Activated CD8-positive, alpha-beta T cell treated with anti-CD3 and anti-CD28 coated beads for 36 hours (primary cell): ENCODE measurements at regions of chr5 and their contacts with region 1.

Region 1: GRCh38 chr5:181173420-181174342 is 26.3 kb downstream of the OR2V2 start:
- DNase-seq: peak; percentile 88
- ATAC-seq: peak; percentile 75
- H3K4me3 Mint-ChIP-seq: peak overlapping the region; percentile 79
- H3K27ac Mint-ChIP-seq: peak overlapping the region; percentile 85
- H3K4me1 Mint-ChIP-seq: peaks cover 37% of the 10 kb centered on the region
- H3K27me3 Mint-ChIP-seq: peaks cover 46% of the 10 kb centered on the region
- CTCF ChIP-seq: no peak

Region 2: DNA sequence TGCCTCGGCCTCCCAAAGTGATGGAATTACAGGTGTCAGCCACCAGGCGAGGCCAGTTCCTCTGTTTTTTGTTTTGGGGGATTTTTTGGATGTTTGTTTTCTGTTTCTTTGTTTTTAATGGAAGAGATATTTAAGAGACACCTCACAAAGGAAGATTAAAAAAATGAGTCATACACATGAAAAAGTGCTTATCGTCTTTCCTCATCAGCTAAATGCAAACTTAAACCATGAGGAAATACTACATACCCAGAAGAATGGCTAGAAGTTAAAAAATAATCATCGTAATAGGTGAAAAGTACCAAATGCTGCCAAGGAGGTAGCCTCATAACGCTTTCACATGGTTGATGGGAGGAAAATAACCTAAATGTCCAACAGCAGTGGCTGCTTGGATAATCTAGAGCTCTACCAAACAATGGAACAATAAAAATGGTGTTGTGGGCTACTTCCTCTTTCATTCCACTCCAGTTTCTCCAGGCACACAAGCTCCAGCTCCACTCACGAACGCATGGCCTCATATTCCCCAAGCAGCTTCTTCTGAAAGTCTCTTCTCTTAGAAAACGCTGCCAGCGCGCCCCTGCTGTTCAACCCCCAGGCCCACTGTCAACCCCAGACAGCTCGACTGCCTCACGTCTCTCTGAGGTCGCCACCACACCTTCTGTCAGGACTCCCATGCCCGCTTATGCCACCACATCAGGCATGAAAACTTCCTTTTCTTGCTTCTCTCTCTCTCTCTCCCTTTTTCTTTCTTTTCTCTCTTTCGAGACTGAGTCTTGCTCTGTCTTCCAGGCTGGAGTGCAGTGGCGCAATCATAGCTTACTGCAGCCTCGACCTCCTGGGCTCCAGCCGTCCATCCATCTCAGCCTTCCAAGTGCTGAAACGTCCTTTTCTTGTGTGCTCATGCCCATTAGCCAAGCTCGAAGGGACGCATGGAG is 10.3 kb before region 1 on chr5:
- CTCF ChIA-PET with region 1: interaction called, 4 read pairs
- POLR2A ChIA-PET with region 1: interaction called, 11 read pairs
- intact Hi-C with region 1: no loop called
- DNase-seq: peak; percentile 41
- ATAC-seq: no peak
- H3K4me3 Mint-ChIP-seq: peak overlapping the region; percentile 57
- H3K27ac Mint-ChIP-seq: peak overlapping the region; percentile 85
- H3K4me1 Mint-ChIP-seq: peaks cover 55% of the 10 kb centered on the region
- H3K27me3 Mint-ChIP-seq: peaks cover 29% of the 10 kb centered on the region
- CTCF ChIP-seq: no peak

Region 3: GRCh38 chr5:181184857-181185251 is 11.2 kb after region 1 on chr5:
- CTCF ChIA-PET with region 1: interaction called, 34 read pairs
- POLR2A ChIA-PET with region 1: interaction called, 11 read pairs
- intact Hi-C with region 1: no loop called
- DNase-seq: no peak
- ATAC-seq: no peak
- H3K4me3 Mint-ChIP-seq: peak overlapping the region; percentile 86
- H3K27ac Mint-ChIP-seq: peak overlapping the region; percentile 96
- H3K4me1 Mint-ChIP-seq: peaks cover 28% of the 10 kb centered on the region
- H3K27me3 Mint-ChIP-seq: peaks cover 4% of the 10 kb centered on the region
- CTCF ChIP-seq: no peak

Region 4: GRCh38 chr5:181271081-181271480 is 97.4 kb after region 1 on chr5:
- CTCF ChIA-PET with region 1: no interaction called
- POLR2A ChIA-PET with region 1: no interaction called
- intact Hi-C with region 1: no loop called
- DNase-seq: no peak
- ATAC-seq: no peak
- H3K4me3 Mint-ChIP-seq: no peak overlapping the region
- H3K27ac Mint-ChIP-seq: no peak overlapping the region
- H3K4me1 Mint-ChIP-seq: peaks cover 2% of the 10 kb centered on the region
- H3K27me3 Mint-ChIP-seq: no peaks in the 10 kb centered on the region
- CTCF ChIP-seq: no peak